Panc1 (cell line): ENCODE measurements at regions of chr10 and their contacts with region 1.

Region 1: GRCh38 chr10:123522702-123523312 is 143.3 kb upstream of the GPR26 start:
- DNase-seq: no peak
- ATAC-seq: no peak
- H3K4me3 ChIP-seq: no peak overlapping the region
- H3K27ac ChIP-seq: no peak overlapping the region
- H3K4me1 ChIP-seq: no peaks in the 10 kb centered on the region
- H3K27me3 ChIP-seq: peaks cover 4% of the 10 kb centered on the region; the same call in 1 of the 2 replicates
- CTCF ChIP-seq: no peak

Region 2: GRCh38 chr10:122931088-122931958 is 591.5 kb before region 1 on chr10:
- CTCF ChIA-PET with region 1: no interaction called
- POLR2A ChIA-PET with region 1: no interaction called
- in situ Hi-C with region 1: no loop called
- intact Hi-C with region 1: no loop called
- DNase-seq: no peak
- ATAC-seq: no peak
- H3K4me3 ChIP-seq: no peak overlapping the region
- H3K27ac ChIP-seq: no peak overlapping the region
- H3K4me1 ChIP-seq: no peaks in the 10 kb centered on the region
- H3K27me3 ChIP-seq: no peaks in the 10 kb centered on the region
- CTCF ChIP-seq: no peak

Region 3: GRCh38 chr10:123496375-123496774 is 26.4 kb before region 1 on chr10:
- CTCF ChIA-PET with region 1: no interaction called
- POLR2A ChIA-PET with region 1: interaction called, 10 read pairs
- in situ Hi-C with region 1: no loop called
- intact Hi-C with region 1: no loop called
- DNase-seq: no peak
- ATAC-seq: no peak
- H3K4me3 ChIP-seq: no peak overlapping the region
- H3K27ac ChIP-seq: no peak overlapping the region
- H3K4me1 ChIP-seq: no peaks in the 10 kb centered on the region
- H3K27me3 ChIP-seq: peaks cover 20% of the 10 kb centered on the region
- CTCF ChIP-seq: no peak

Region 4: DNA sequence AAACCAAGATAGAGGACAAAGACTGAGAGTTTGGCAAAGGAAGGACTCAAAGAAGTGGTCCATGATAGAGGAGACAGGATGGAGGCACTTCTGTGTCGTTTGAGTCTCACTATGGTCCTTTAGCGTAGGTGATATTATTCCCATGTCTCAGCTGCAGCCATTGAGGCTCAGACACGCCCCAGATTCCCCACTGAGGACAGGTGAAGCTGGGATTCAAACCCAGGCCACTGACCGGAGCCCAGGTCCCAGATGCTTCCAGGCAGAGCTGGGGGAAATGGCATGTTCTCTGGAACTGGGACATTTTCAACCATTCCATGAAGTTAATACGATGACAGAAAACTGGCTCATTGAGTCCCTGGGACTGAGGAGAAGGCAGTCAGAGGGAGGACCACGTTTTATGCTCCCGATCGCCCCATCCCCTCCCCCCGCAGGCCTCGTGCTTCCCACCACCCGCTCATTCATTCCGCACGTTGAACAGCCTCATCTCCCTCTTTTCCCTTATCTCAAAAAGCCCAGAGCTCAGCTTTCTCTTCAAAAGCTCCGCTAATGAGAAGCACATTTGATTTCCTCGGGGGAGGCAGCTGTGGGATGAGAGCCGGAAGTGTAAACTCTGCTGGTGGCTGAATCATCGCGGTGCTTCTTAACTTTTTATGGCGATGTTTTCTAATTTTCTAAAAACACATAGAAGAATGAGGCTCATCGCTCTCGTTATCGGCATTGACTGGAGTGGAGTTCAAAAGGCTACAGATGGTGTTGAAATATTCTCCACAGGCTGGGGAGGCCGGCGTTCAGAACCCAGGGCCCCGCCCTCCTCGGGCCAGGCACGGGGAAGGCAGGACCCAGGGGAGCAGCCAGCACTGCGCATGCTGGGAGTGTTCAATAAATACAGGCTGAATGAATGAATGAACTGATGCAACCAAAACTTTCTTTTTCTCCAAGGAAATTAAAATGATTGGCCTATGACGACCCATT is 831.9 kb after region 1 on chr10:
- CTCF ChIA-PET with region 1: no interaction called
- POLR2A ChIA-PET with region 1: interaction called, 13 read pairs
- in situ Hi-C with region 1: no loop called
- intact Hi-C with region 1: no loop called
- DNase-seq: peak; percentile 22
- ATAC-seq: peak; percentile 95
- H3K4me3 ChIP-seq: peak overlapping the region; percentile 44 to 67
- H3K27ac ChIP-seq: peak overlapping the region; percentile 71
- H3K4me1 ChIP-seq: peaks cover 10% of the 10 kb centered on the region
- H3K27me3 ChIP-seq: no peaks in the 10 kb centered on the region; the same call in 1 of the 2 replicates
- CTCF ChIP-seq: no peak